CD4-positive, alpha-beta memory T cell (primary cell): ENCODE measurements at regions of chr1 and their contacts with region 1.

Region 1: GRCh38 chr1:151594143-151594625 is 17.7 kb upstream of the SNX27 start:
- DNase-seq: peak; percentile 82 to 84 (median 83)
- H3K4me3 ChIP-seq: peak overlapping the region in 1 of 2 donors; percentile 33
- H3K4me3 Mint-ChIP-seq: peak overlapping the region in 7 of 8 donors; percentile 33 to 82 (median 70)
- H3K27ac ChIP-seq: no peak overlapping the region
- H3K27ac Mint-ChIP-seq: peak overlapping the region in 6 of 7 donors; percentile 4 to 49 (median 26)
- H3K4me1 ChIP-seq: peaks cover 5% of the 10 kb centered on the region
- H3K4me1 Mint-ChIP-seq: peaks cover 3 to 12% (median 9%) of the 10 kb centered on the region in 4 donors
- H3K27me3 ChIP-seq: no peaks in the 10 kb centered on the region
- H3K27me3 Mint-ChIP-seq: peaks cover 4 to 8% of the 10 kb centered on the region in 2 donors

Region 2: GRCh38 chr1:151534665-151535278 is 59.4 kb before region 1 on chr1:
- CTCF ChIA-PET with region 1: interaction called, 4 read pairs
- POLR2A ChIA-PET with region 1: no interaction called
- intact Hi-C with region 1: loop called (anchors 1 kb)
- DNase-seq: peak; percentile 63 to 70 (median 65)
- H3K4me3 ChIP-seq: no peak overlapping the region
- H3K4me3 Mint-ChIP-seq: no peak overlapping the region
- H3K27ac ChIP-seq: no peak overlapping the region
- H3K27ac Mint-ChIP-seq: peak overlapping the region in 1 of 7 donors; percentile 12
- H3K4me1 ChIP-seq: peaks cover 7% of the 10 kb centered on the region
- H3K4me1 Mint-ChIP-seq: peaks cover 0 to 6% (median 4%) of the 10 kb centered on the region in 4 donors
- H3K27me3 ChIP-seq: no peaks in the 10 kb centered on the region
- H3K27me3 Mint-ChIP-seq: peaks cover 2 to 3% of the 10 kb centered on the region in 2 donors

Region 3: DNA sequence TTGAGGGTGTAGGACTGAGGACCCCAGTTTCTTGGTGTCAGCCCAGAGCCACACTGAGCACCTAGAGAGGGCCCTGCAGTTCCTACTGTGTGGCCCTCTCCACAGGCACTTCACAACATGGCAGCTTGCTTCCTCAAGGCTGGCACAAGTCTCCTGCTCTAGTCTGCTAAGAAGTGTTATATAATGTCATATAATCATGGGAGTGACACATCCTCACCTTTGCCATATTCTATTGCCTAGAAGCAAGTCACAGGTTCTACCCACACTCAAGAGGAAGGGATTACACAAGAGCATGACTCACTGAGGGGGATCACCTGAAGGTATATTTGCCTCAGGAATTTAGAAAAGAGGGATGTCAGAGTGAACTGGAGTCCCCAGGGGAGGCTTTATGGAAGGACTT is 12.2 kb after region 1 on chr1:
- CTCF ChIA-PET with region 1: interaction called, 33 read pairs
- POLR2A ChIA-PET with region 1: no interaction called
- intact Hi-C with region 1: loop called (anchors 1 kb)
- DNase-seq: no peak
- H3K4me3 ChIP-seq: no peak overlapping the region
- H3K4me3 Mint-ChIP-seq: no peak overlapping the region
- H3K27ac ChIP-seq: no peak overlapping the region
- H3K27ac Mint-ChIP-seq: no peak overlapping the region
- H3K4me1 ChIP-seq: peaks cover 2% of the 10 kb centered on the region
- H3K4me1 Mint-ChIP-seq: peaks cover 0 to 2% (median 1%) of the 10 kb centered on the region in 4 donors
- H3K27me3 ChIP-seq: no peaks in the 10 kb centered on the region
- H3K27me3 Mint-ChIP-seq: peaks cover 5 to 10% of the 10 kb centered on the region in 2 donors

Region 4: GRCh38 chr1:151710187-151710840 is 116.1 kb after region 1 on chr1:
- CTCF ChIA-PET with region 1: no interaction called
- POLR2A ChIA-PET with region 1: no interaction called
- intact Hi-C with region 1: no loop called
- DNase-seq: peak in 4 of 5 donors; percentile 14 to 55 (median 28)
- H3K4me3 ChIP-seq: no peak overlapping the region
- H3K4me3 Mint-ChIP-seq: no peak overlapping the region
- H3K27ac ChIP-seq: no peak overlapping the region
- H3K27ac Mint-ChIP-seq: no peak overlapping the region
- H3K4me1 ChIP-seq: no peaks in the 10 kb centered on the region
- H3K4me1 Mint-ChIP-seq: peaks cover 0 to 7% (median 3%) of the 10 kb centered on the region in 4 donors
- H3K27me3 ChIP-seq: no peaks in the 10 kb centered on the region
- H3K27me3 Mint-ChIP-seq: peaks cover 13 to 19% of the 10 kb centered on the region in 2 donors

Region 5: GRCh38 chr1:151733134-151733533 is 138.9 kb after region 1 on chr1:
- CTCF ChIA-PET with region 1: interaction called, 21 read pairs
- POLR2A ChIA-PET with region 1: no interaction called
- intact Hi-C with region 1: loop called (anchors 1 kb)
- DNase-seq: no peak
- H3K4me3 ChIP-seq: no peak overlapping the region
- H3K4me3 Mint-ChIP-seq: no peak overlapping the region
- H3K27ac ChIP-seq: no peak overlapping the region
- H3K27ac Mint-ChIP-seq: no peak overlapping the region
- H3K4me1 ChIP-seq: no peaks in the 10 kb centered on the region
- H3K4me1 Mint-ChIP-seq: no peaks in the 10 kb centered on the region
- H3K27me3 ChIP-seq: no peaks in the 10 kb centered on the region
- H3K27me3 Mint-ChIP-seq: peaks cover 16 to 23% of the 10 kb centered on the region in 2 donors

Region 6: GRCh38 chr1:151828965-151829698 is 234.9 kb after region 1 on chr1:
- CTCF ChIA-PET with region 1: interaction called, 69 read pairs
- POLR2A ChIA-PET with region 1: no interaction called
- intact Hi-C with region 1: no loop called
- DNase-seq: no peak
- H3K4me3 ChIP-seq: no peak overlapping the region
- H3K4me3 Mint-ChIP-seq: peak overlapping the region; percentile 60 to 94 (median 76)
- H3K27ac ChIP-seq: peak overlapping the region; percentile 62
- H3K27ac Mint-ChIP-seq: peak overlapping the region; percentile 88 to 96 (median 93)
- H3K4me1 ChIP-seq: peaks cover 90% of the 10 kb centered on the region
- H3K4me1 Mint-ChIP-seq: peaks cover 55 to 98% (median 75%) of the 10 kb centered on the region in 4 donors
- H3K27me3 ChIP-seq: no peaks in the 10 kb centered on the region
- H3K27me3 Mint-ChIP-seq: no peaks in the 10 kb centered on the region

Region 7: DNA sequence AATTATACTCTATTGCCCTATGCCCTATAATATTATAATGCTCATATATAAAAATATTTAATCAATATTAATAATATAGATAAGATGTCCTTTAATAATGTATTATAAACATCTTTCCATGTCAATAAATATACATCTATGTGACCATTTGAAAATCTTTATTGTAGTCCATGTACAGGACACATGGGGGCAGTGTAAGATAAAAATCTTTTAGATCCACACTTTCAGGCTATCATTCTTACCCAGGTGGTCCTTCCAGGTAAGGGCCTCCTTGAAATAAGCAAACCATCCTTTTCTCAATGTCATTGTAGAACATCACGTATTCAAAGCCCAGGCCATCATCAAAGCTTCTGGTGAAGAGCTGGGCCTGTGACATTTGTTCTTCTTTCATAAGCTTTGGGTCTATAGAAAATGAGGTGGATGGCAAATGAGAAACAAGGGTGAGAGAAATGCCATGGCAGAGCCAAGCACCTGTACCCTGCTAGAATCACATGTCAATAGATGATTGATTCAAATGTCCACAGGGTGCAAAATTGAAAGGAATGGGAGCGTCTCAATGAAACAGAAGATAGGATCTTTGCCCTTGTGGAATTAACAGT is 294.9 kb after region 1 on chr1:
- CTCF ChIA-PET with region 1: no interaction called
- POLR2A ChIA-PET with region 1: no interaction called
- intact Hi-C with region 1: no loop called
- DNase-seq: peak in 4 of 5 donors; percentile 27 to 45 (median 34)
- H3K4me3 ChIP-seq: no peak overlapping the region
- H3K4me3 Mint-ChIP-seq: no peak overlapping the region
- H3K27ac ChIP-seq: no peak overlapping the region
- H3K27ac Mint-ChIP-seq: peak overlapping the region in 6 of 7 donors; percentile 18 to 84 (median 64)
- H3K4me1 ChIP-seq: peaks cover 21% of the 10 kb centered on the region
- H3K4me1 Mint-ChIP-seq: peaks cover 27 to 38% (median 33%) of the 10 kb centered on the region in 4 donors
- H3K27me3 ChIP-seq: no peaks in the 10 kb centered on the region
- H3K27me3 Mint-ChIP-seq: no peaks in the 10 kb centered on the region